PC-9 (cell line): ENCODE measurements at regions of chr15 and their contacts with region 1.

Region 1: GRCh38 chr15:79329171-79329611 is 18.3 kb downstream of the TMED3 start:
- DNase-seq: peak; percentile 4 to 68
- H3K4me3 ChIP-seq: no peak overlapping the region
- H3K27ac ChIP-seq: peak overlapping the region; percentile 80
- H3K4me1 ChIP-seq: peaks cover 47% of the 10 kb centered on the region
- H3K27me3 ChIP-seq: no peaks in the 10 kb centered on the region
- CTCF ChIP-seq: no peak

Region 2: DNA sequence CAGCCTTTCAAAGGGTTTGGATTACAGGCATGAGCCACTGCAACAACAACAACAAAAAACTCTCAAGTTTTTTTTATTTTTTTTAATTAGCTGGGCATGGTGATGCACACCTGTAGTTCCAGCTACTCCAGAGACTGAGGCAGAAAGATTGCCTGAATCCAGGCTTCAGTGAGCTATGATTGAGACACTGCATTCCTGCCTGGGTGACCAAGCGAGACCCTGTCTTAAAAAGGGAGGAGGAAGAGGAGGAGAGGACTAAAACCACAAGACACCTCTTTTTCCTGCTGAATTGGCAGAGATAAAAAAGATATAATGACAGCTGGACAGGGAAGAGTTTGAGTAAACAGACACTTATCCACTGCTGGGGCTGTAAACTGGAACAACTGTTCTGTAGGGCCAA is 665.5 kb before region 1 on chr15:
- CTCF ChIA-PET with region 1: no interaction called
- POLR2A ChIA-PET with region 1: interaction called, 18 read pairs
- intact Hi-C with region 1: no loop called
- DNase-seq: peak in 1 of 2 experiments; percentile 13
- H3K4me3 ChIP-seq: no peak overlapping the region
- H3K27ac ChIP-seq: peak overlapping the region; percentile 50
- H3K4me1 ChIP-seq: peaks cover 13% of the 10 kb centered on the region
- H3K27me3 ChIP-seq: no peaks in the 10 kb centered on the region
- CTCF ChIP-seq: no peak

Region 3: DNA sequence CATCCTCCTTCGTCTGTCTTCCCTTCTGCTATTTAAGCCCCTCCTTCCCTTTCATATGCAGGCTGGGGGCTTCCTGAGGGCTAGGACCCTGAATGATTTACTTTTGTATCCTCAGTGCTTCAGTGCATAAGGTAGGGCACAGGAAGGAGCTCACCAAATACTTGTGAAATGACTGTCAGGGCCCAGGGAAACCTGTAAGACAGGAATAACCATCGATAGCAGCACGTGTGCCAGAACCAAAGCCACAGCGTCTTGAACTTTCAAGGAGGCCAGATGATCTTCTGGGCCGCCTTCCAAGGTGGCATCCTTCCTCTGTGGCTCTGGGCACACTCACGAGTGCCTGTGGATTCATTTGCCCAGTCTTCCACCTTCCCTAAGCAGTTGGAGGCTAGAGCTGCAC is 14.4 kb before region 1 on chr15:
- CTCF ChIA-PET with region 1: no interaction called
- POLR2A ChIA-PET with region 1: no interaction called
- intact Hi-C with region 1: loop called (anchors 1 kb)
- DNase-seq: peak; percentile 73 to 90
- H3K4me3 ChIP-seq: 0 out of 2 replicates have a peak overlapping the region, but pooled peaks have one; percentile 6
- H3K27ac ChIP-seq: peak overlapping the region; percentile 59
- H3K4me1 ChIP-seq: peaks cover 35% of the 10 kb centered on the region
- H3K27me3 ChIP-seq: no peaks in the 10 kb centered on the region
- CTCF ChIP-seq: no peak

Region 4: DNA sequence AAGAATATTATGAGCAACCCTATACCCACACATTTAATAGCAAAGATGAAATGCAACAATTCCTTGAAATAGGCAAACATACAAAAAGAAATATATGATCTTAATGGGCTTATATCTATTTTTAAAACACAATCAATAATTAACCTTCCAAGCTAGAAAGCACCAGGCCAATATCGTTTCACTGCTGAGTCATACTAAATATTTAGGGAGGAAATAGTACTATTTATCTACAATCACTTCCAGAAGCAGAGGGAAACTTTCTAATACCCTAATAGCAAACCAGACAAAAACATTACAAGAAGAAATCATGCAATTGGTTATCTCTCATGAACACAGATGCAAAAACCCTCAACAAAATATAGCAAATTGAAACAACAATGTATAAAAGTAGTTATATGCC is 359.8 kb after region 1 on chr15:
- CTCF ChIA-PET with region 1: no interaction called
- POLR2A ChIA-PET with region 1: no interaction called
- intact Hi-C with region 1: no loop called
- DNase-seq: no peak
- H3K4me3 ChIP-seq: no peak overlapping the region
- H3K27ac ChIP-seq: no peak overlapping the region
- H3K4me1 ChIP-seq: no peaks in the 10 kb centered on the region
- H3K27me3 ChIP-seq: no peaks in the 10 kb centered on the region; the same call in 1 of the 2 replicates
- CTCF ChIP-seq: no peak